Ascending aorta (tissue), 2 donors: ENCODE measurements at regions of chr13 and their contacts with region 1.

Region 1: GRCh38 chr13:21060987-21061763 is at the start of gene LATS2:
- DNase-seq: peak; percentile 82 to 98
- H3K4me3 ChIP-seq: peak within 1 kb of the TSS; percentile 84 to 89
- H3K27ac ChIP-seq: peak within 1 kb of the TSS; percentile 98 to 100
- H3K4me1 ChIP-seq: peaks cover 4 to 22% of the 10 kb centered on the region in 2 donors
- H3K27me3 ChIP-seq: no peaks in the 10 kb centered on the region
- CTCF ChIP-seq: peak in 2 of 3 experiments; percentile 41 to 50
- total RNA-seq, gene LATS2: 49.0 TPM

Region 2: GRCh38 chr13:20814224-20814910 is 246.8 kb before region 1 on chr13:
- intact Hi-C with region 1: loop called (anchors 10 kb)
- DNase-seq: peak; percentile 67 to 96
- H3K4me3 ChIP-seq: peak overlapping the region in 1 of 2 donors; percentile 38
- H3K27ac ChIP-seq: peak overlapping the region; percentile 82 to 87
- H3K4me1 ChIP-seq: peaks cover 0 to 24% of the 10 kb centered on the region in 2 donors
- H3K27me3 ChIP-seq: no peaks in the 10 kb centered on the region
- CTCF ChIP-seq: no peak

Region 3: DNA sequence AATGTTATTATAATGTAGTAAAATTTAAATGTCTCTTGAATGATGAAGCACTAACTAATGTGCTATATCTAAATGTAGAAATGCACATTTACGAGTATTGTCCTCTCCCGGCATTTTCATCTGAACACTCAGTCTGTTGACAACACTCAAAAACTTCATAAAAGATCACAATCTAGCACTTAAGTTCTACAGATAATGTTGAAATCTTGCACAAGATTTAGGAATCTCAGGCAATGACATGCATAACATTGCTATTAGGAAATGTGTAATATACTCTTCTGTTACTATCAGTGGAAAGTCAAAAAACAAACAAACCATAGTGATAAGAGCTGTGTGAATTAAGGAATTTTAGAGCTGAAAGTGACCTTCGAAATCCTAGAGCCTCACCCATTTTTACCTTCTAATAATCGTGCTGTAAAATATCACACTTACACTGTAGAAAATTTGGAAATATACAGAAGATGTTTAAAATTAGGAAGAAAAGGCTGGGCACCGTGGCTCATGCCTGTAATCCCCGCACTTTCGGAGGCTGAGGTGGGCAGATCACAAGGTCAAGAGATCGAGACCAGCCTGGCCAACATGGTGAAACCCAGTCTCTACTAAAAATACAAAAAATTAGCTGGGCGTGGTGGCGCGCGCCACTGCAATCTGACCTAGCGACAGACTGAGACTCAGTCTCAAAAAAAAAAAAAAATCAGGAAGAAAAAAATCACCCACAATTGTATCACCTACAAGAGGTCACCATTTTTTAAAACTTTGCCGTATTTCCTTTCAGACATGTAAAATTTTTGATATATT is 120.9 kb before region 1 on chr13:
- intact Hi-C with region 1: loop called (anchors 2 kb)
- DNase-seq: no peak
- H3K4me3 ChIP-seq: no peak overlapping the region
- H3K27ac ChIP-seq: no peak overlapping the region
- H3K4me1 ChIP-seq: no peaks in the 10 kb centered on the region
- H3K27me3 ChIP-seq: no peaks in the 10 kb centered on the region
- CTCF ChIP-seq: no peak

Region 4: DNA sequence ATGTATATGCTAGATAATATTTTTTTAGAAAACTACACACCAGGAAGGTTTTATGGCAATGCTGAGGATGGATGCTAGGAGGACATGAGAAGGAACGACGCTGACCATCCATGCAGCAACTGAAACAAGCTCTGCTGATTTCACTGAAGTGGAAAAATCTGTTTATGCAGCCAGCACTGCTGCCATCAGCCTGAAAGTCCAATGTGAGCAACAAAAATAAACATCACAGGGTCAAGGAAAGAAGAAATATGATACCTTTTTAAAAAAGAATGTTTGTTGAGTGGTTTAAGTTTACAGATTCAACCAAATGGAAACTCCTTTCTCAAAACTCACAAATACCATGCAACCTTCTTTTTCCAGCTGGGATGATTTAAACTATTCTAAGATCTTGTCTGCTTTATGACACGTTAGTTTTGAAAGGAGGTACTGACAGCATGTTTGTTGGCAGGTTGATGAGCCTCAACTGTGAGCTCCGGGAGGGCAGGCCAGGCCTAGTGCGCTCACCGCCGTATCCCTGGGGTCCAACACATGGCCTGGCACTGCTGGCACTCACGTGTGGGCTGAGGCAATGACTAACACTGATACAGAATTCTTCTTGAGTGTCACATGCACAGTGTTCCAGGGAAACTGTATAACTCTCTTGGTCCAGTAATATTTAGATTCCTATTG is 46.5 kb before region 1 on chr13:
- intact Hi-C with region 1: loop called (anchors 1 kb)
- DNase-seq: no peak
- H3K4me3 ChIP-seq: no peak overlapping the region
- H3K27ac ChIP-seq: peak overlapping the region; percentile 34 to 45
- H3K4me1 ChIP-seq: peaks cover 18 to 67% of the 10 kb centered on the region in 2 donors
- H3K27me3 ChIP-seq: no peaks in the 10 kb centered on the region
- CTCF ChIP-seq: no peak

Region 5: DNA sequence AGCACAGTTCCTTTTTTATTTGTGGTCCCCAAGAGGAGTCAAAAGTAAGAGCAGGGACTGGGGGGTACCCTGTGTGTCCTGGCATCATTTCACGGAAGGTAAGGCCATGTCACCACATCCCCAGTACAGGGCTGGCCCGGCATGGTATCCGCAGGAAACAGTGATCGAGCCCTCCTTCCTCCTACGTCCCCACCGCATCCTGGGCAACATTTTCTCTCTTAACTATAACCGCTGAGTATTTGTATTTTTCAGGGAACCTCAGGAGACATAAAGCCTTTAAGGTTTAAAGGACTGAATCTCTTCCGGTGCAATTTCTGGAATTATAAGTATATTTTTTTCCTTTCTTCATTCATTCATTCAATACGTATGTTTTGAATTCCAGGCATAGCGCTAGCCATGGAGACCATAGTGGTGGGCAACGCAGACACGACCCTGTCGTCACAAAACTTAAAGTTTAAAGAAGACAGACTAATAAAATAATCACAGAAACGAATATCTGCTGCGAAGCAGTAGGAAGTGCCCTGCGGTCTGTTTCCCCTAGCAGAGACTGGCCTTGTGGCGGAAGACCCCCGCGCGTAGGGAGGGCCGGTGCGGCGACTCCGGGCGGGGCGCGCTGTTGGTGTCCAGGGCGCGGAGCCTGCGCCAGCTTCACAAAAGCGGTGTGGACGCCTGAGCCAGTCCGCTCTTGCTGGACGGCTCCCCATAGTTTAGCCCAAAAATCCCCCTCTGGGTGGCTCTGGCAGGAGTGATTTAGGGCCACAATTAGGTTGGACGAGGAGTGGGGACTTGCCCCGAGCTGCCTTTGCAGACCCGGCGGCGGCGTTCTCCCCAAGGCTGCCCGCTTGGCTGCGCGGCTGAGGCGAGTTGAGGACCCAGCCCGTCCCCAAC is 14.1 kb after region 1 on chr13:
- intact Hi-C with region 1: loop called (anchors 1 kb)
- DNase-seq: peak in 1 of 2 donors; percentile 74
- H3K4me3 ChIP-seq: peak overlapping the region; percentile 64 to 90
- H3K27ac ChIP-seq: peak overlapping the region; percentile 77 to 81
- H3K4me1 ChIP-seq: peaks cover 5 to 17% of the 10 kb centered on the region in 2 donors
- H3K27me3 ChIP-seq: no peaks in the 10 kb centered on the region
- CTCF ChIP-seq: no peak

Region 6: DNA sequence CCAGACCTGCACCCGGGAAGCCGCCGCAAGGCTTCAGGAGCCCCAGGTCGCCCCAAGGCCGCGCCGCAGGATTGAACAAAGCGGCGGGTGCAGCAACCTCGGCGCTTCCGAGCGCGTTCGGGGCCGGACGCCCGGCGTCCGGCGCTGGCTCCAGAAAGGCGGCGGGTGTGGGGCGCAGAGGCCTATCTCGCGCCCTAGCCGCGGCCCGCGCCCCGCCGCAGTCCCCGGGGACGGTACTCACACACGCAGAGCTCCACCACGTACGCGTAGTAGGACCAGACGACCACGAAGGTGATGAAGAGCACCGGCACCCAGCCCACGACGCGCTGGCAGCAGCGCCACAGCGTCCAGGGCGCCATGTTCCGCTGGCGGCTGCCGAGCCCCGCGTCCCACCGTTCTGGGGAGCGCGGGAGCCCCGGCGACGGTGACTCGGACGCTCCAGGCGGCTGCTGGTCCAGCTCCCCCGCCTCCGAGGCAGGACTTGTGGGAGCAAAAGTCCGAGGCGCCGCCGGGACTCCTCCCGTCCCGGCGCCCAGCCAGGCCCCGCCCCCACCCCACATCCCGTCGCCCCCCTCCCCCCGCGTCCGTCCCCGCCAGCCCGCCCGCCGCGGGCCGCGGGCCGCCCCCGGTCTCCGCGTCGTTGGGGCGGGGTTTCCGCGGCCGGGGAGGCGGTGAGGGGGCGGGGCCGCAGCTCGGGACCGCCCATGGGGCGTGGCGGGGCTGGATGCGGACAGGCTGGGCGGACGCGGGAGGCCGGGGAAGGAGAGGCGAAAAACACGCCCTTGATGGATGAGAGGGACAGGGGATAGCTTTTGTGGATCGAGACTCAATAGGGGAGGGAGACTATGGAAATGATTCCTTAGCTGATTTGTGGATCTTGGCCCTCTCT is 397.9 kb after region 1 on chr13 and contains the start of gene ZDHHC20:
- intact Hi-C with region 1: loop called (anchors 10 kb)
- DNase-seq: peak; percentile 59 to 94
- H3K4me3 ChIP-seq: peak within 1 kb of the TSS; percentile 88 to 93
- H3K27ac ChIP-seq: peak within 1 kb of the TSS; percentile 90 to 95
- H3K4me1 ChIP-seq: no peaks in the 10 kb centered on the region
- H3K27me3 ChIP-seq: no peaks in the 10 kb centered on the region
- CTCF ChIP-seq: no peak
- total RNA-seq, gene ZDHHC20: 39.8 TPM